Activated CD4-positive, alpha-beta memory T cell treated with anti-CD3 and anti-CD28 coated beads for 36 hours (primary cell): ENCODE measurements at regions of chr1 and their contacts with region 1.

Region 1: DNA sequence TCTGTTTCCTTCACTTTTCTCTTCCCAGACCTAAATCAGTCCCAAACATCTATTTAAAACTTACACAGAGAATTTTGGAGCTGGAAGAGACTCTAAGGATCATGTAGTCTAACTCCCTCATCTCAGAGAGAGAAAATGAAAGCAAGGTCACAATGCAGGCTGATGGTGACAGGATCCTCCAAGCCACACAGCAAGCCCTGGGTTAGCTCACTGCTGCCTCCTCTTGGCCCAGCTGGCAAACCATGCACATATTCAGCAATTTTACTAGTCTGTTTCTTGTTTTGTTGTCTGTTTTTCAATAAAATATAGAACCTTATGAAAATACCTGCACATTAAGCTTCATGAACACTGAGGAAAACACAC is 27.7 kb upstream of the LY9 start:
- DNase-seq: peak; percentile 93
- H3K4me3 Mint-ChIP-seq: peak overlapping the region; percentile 78
- H3K27ac Mint-ChIP-seq: peak overlapping the region; percentile 96
- H3K4me1 Mint-ChIP-seq: peaks cover 28% of the 10 kb centered on the region
- H3K27me3 Mint-ChIP-seq: no peaks in the 10 kb centered on the region

Region 2: GRCh38 chr1:160681067-160681890 is 87.0 kb before region 1 on chr1:
- CTCF ChIA-PET with region 1: interaction called, 154 read pairs
- POLR2A ChIA-PET with region 1: interaction called, 10 read pairs
- intact Hi-C with region 1: loop called (anchors 1 kb)
- DNase-seq: peak; percentile 94
- H3K4me3 Mint-ChIP-seq: peak overlapping the region; percentile 17
- H3K27ac Mint-ChIP-seq: peak overlapping the region; percentile 96
- H3K4me1 Mint-ChIP-seq: peaks cover 87% of the 10 kb centered on the region
- H3K27me3 Mint-ChIP-seq: no peaks in the 10 kb centered on the region

Region 3: GRCh38 chr1:160720356-160721085 is 47.8 kb before region 1 on chr1:
- CTCF ChIA-PET with region 1: interaction called, 205 read pairs
- POLR2A ChIA-PET with region 1: interaction called, 13 read pairs
- intact Hi-C with region 1: no loop called
- DNase-seq: no peak
- H3K4me3 Mint-ChIP-seq: no peak overlapping the region
- H3K27ac Mint-ChIP-seq: no peak overlapping the region
- H3K4me1 Mint-ChIP-seq: peaks cover 42% of the 10 kb centered on the region
- H3K27me3 Mint-ChIP-seq: no peaks in the 10 kb centered on the region

Region 4: GRCh38 chr1:160733898-160734297 is 34.4 kb before region 1 on chr1:
- CTCF ChIA-PET with region 1: interaction called, 205 read pairs
- POLR2A ChIA-PET with region 1: no interaction called
- intact Hi-C with region 1: no loop called
- DNase-seq: no peak
- H3K4me3 Mint-ChIP-seq: peak overlapping the region; percentile 2
- H3K27ac Mint-ChIP-seq: peak overlapping the region; percentile 43
- H3K4me1 Mint-ChIP-seq: peaks cover 42% of the 10 kb centered on the region
- H3K27me3 Mint-ChIP-seq: no peaks in the 10 kb centered on the region

Region 5: DNA sequence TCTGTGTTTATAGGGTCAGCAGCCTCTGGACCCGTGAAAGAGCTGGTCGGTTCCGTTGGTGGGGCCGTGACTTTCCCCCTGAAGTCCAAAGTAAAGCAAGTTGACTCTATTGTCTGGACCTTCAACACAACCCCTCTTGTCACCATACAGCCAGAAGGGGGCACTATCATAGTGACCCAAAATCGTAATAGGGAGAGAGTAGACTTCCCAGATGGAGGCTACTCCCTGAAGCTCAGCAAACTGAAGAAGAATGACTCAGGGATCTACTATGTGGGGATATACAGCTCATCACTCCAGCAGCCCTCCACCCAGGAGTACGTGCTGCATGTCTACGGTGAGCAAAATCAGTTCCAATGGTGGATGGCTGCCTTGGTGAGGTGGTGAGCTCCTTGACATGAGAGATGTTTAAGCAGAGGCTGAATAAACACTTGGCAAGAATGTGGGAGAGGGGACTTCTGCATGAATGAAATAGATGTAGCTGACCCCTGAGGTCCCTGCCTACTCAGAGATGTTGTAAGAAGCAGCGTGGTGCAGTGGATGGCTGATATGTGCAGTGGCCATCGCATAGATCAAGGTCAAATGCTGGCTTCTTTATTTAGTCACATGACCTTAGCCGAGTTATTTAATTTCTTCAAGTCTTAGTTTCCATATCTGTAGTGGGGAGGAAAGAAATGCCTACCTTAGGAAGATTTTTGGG is 19.9 kb before region 1 on chr1:
- CTCF ChIA-PET with region 1: interaction called, 85 read pairs
- POLR2A ChIA-PET with region 1: interaction called, 4 read pairs
- intact Hi-C with region 1: loop called (anchors 1 kb)
- DNase-seq: no peak
- H3K4me3 Mint-ChIP-seq: no peak overlapping the region
- H3K27ac Mint-ChIP-seq: no peak overlapping the region
- H3K4me1 Mint-ChIP-seq: peaks cover 62% of the 10 kb centered on the region
- H3K27me3 Mint-ChIP-seq: no peaks in the 10 kb centered on the region

Region 6: DNA sequence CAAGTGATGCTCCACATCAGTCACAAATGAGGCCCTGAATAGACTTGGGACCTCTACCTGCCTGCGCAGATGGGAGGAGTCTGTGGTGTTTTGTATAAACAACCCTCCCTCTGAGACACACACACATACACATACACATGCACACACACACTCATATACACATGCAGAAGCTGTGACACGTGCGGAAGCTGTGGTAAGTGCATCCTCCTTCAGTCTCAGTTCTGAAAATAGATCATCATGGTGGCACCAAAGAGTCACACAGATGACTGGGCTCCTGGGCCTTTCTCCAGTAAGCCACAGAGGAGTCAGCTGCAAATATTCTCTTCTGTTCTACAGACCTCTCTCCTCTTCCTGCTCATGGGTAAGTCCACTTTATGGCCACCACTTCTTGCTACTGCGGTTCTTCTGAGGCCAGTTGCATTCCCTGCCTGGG is 27.7 kb after region 1 on chr1 and contains the start of gene LY9:
- CTCF ChIA-PET with region 1: interaction called, 37 read pairs
- POLR2A ChIA-PET with region 1: interaction called, 8 read pairs
- intact Hi-C with region 1: loop called (anchors 2 kb)
- DNase-seq: peak; percentile 90
- H3K4me3 Mint-ChIP-seq: peak within 1 kb of the TSS; percentile 77
- H3K27ac Mint-ChIP-seq: peak within 1 kb of the TSS; percentile 88
- H3K4me1 Mint-ChIP-seq: peaks cover 61% of the 10 kb centered on the region
- H3K27me3 Mint-ChIP-seq: no peaks in the 10 kb centered on the region
- total RNA-seq, gene LY9: 4.8 to 4.9 TPM

Region 7: GRCh38 chr1:160855181-160855981 is 87.1 kb after region 1 on chr1:
- CTCF ChIA-PET with region 1: no interaction called
- POLR2A ChIA-PET with region 1: no interaction called
- intact Hi-C with region 1: no loop called
- DNase-seq: no peak
- H3K4me3 Mint-ChIP-seq: no peak overlapping the region
- H3K27ac Mint-ChIP-seq: no peak overlapping the region
- H3K4me1 Mint-ChIP-seq: no peaks in the 10 kb centered on the region
- H3K27me3 Mint-ChIP-seq: no peaks in the 10 kb centered on the region